ENCODE measurements at regions of chr17 and their contacts with region 1.

Region 1: GRCh38 chr17:64145757-64146417 is 15.9 kb upstream of the ERN1 start:
- DNase-seq: peak; percentile 97 to 99
- ATAC-seq: peak; percentile 99
- H3K4me3 ChIP-seq: peak overlapping the region; percentile 69 to 89
- H3K27ac ChIP-seq: peak overlapping the region; percentile 73 to 87
- H3K4me1 ChIP-seq: peaks cover 0 to 2% of the 10 kb centered on the region in 2 donors
- H3K27me3 ChIP-seq: peaks cover 0 to 2% of the 10 kb centered on the region in 2 donors

Region 2: DNA sequence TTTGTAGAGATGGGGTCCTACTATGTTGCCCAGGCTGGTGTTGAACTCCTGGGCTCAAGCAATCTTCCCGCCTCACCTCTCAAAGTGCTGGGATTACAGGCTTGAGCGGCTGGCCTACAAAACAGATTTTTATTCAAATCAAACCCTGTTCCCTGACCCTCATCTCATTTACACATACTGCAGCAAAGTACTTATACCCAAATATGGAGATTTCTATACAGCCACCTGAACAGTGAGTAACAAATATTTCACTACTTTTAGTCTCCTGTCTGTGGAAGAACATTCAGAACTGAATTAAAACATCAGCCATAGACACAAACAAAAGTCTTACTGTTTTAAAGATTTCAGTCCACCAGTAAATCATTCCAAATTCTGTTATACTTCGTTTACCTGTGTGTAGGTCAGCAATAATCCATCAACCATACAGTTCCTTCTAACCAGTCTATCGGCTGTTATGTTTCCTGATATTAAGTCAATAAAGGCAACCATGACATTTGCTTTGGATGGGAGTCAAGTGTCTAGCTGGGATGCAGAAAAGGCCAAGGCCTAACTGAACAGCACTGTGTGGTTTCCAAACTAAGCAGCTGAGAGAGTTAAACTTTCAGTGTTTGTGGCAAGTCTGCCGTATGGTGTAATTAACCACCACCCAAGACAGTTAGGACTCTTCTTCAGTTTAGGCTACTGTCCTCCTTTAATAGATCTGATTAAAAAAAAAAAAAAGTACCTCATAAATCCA is 38.2 kb before region 1 on chr17:
- intact Hi-C with region 1: no loop called
- DNase-seq: no peak
- ATAC-seq: no peak
- H3K4me3 ChIP-seq: no peak overlapping the region
- H3K27ac ChIP-seq: no peak overlapping the region
- H3K4me1 ChIP-seq: peaks cover 2 to 6% of the 10 kb centered on the region in 2 donors
- H3K27me3 ChIP-seq: no peaks in the 10 kb centered on the region

Region 3: DNA sequence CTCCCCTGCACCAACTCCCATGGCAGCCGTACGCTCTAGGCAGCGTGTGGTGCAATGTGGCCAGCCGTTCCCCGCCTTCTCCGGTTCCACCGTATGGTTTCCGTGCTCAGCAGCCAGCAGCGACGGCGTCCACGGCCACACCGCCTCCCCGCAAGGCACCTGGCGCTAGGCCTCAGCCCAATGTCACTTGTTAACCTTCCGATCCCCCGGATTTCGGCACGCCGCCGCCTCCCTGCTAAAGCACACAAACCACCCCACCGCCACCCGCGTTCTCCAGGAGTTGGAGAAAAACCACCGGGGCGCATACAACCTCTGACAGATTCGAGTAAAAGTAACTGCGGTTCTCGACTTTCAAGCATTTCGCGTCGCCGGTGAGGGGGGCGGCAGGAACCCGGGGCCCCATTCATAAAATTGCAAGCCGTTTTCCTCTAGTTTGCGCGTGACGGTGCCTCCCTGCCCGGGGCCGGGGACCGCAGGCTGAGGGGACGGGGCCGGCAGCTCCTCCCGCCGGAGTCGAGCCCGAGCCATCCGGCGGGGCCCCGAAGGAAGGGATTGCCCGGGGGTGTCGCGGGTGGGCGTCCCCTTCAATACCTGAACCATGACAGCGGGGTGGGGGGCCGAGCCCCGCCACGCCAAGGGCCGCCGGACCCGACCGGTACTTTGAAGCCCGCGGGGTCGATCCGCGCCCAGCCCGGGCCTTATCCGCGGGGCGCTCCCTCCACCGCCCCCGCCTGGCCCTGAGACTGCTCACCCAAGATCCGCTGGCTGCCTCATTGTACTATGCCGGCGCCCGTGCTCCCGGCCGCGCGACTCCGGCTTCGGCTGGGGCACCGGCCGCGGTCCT is 116.8 kb after region 1 on chr17 and contains the start of gene TEX2:
- intact Hi-C with region 1: loop called (anchors 2 to 5 kb)
- DNase-seq: peak; percentile 69 to 85
- ATAC-seq: peak; percentile 67
- H3K4me3 ChIP-seq: peak within 1 kb of the TSS; percentile 82 to 92
- H3K27ac ChIP-seq: peak within 1 kb of the TSS in 1 of 2 donors; percentile 76
- H3K4me1 ChIP-seq: peaks cover 0 to 3% of the 10 kb centered on the region in 2 donors
- H3K27me3 ChIP-seq: no peaks in the 10 kb centered on the region
- total RNA-seq, gene TEX2: 26.6 to 29.4 TPM

Region 4: GRCh38 chr17:64281962-64282727 is 136.3 kb after region 1 on chr17:
- intact Hi-C with region 1: loop called (anchors 1 to 5 kb)
- DNase-seq: peak in 1 of 2 donors; percentile 61
- ATAC-seq: peak; percentile 68
- H3K4me3 ChIP-seq: no peak overlapping the region
- H3K27ac ChIP-seq: no peak overlapping the region
- H3K4me1 ChIP-seq: no peaks in the 10 kb centered on the region
- H3K27me3 ChIP-seq: no peaks in the 10 kb centered on the region

Region 5: GRCh38 chr17:64506576-64507477 is 360.9 kb after region 1 on chr17 and contains the start of gene CEP95:
- intact Hi-C with region 1: loop called in 1 of 2 experiments (anchors 10 kb)
- DNase-seq: peak; percentile 97
- ATAC-seq: peak; percentile 92
- H3K4me3 ChIP-seq: peak within 1 kb of the TSS; percentile 62 to 89
- H3K27ac ChIP-seq: peak within 1 kb of the TSS; percentile 73 to 95
- H3K4me1 ChIP-seq: no peaks in the 10 kb centered on the region
- H3K27me3 ChIP-seq: peaks cover 0 to 1% of the 10 kb centered on the region in 2 donors
- total RNA-seq, gene CEP95: 39.7 to 49.8 TPM

Measured in aorta (tissue), 5 donors.